Caco-2 (cell line): ENCODE measurements at regions of chr14 and their contacts with region 1.

Region 1: DNA sequence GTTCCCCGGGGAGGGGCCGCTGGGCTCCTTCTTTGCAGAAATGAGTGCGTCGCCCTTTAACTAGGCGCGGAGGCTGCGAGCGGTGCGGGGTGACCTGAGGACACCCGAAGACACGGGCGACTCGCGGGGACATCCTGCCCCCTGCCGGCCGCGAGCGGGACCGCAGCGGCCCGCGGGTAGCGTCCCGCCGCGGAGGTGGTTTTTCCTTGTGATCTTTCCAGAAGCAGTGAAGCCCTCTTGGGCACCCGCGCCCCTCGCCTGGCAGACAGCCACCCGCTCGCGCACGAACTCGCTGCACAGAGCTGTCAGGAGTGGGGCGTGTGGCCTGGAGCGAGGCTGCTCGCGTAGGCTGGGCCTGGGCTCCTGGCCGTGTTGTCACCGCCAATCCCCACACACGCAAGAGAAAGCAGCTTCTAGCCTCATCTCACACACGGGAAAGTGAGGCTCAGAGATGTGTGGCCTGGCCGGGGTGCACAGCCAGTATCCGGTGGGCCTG is 67.2 kb downstream of the DIO3 start:
- DNase-seq: peak; percentile 56 to 81
- H3K4me3 ChIP-seq: no peak overlapping the region
- H3K4me3 Mint-ChIP-seq: no peak overlapping the region
- H3K27ac Mint-ChIP-seq: no peak overlapping the region
- H3K4me1 ChIP-seq: no peaks in the 10 kb centered on the region
- H3K4me1 Mint-ChIP-seq: no peaks in the 10 kb centered on the region
- H3K27me3 ChIP-seq: no peaks in the 10 kb centered on the region
- H3K27me3 Mint-ChIP-seq: peaks cover 3% of the 10 kb centered on the region
- CTCF ChIP-seq: peak; percentile 86 to 98

Region 2: DNA sequence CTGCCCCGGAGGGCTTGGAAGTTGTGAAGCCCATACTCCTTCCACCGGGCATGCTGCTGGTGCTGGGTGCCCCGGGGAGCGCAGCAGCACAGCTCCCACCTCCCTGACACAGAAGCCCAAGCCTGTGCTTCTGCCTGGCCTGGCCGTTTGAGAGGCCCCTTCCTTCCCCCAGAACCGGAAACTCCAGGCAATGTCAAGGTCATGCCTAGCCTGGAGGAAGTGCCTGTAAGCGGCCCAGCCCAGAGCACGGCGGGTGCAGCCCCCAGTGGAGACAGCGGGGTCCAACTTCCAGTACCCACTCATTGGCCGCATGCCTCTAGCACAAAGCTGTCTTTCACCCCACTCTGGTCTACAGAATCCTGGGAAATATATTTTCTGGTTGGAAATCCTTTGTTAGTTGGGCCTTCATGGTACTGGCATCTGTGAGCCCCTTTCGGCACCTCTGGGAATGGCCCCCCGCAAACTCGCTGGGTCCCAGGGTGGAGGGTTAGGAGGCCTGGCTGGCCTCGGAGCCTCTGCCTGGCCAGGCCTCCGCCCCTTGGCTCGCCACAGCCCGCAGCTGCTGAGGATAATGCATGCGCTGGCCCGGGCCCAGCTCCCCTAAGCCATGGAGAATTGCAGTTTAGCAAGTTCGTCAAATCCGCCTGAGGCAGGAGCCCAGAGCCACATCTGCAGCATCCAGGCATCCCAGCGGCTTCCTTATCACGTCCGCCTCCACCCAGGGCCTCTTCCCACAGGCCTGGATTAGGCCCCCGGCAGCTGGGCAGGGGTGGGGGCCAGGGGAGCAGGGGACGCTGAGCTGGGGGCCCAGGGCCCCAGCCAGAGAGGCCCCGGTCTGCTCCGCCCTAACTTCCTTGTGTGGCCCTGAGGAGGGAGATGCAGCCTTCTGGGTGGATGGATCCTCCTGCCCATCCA is 950.7 kb before region 1 on chr14:
- CTCF ChIA-PET with region 1: interaction called, 5 read pairs
- POLR2A ChIA-PET with region 1: no interaction called
- intact Hi-C with region 1: loop called (anchors 10 kb)
- DNase-seq: no peak
- H3K4me3 ChIP-seq: no peak overlapping the region
- H3K4me3 Mint-ChIP-seq: no peak overlapping the region
- H3K27ac Mint-ChIP-seq: no peak overlapping the region
- H3K4me1 ChIP-seq: 0 out of 2 replicates have a peak, but pooled peaks cover 2% of the 10 kb centered on the region
- H3K4me1 Mint-ChIP-seq: peaks cover 9% of the 10 kb centered on the region
- H3K27me3 ChIP-seq: no peaks in the 10 kb centered on the region
- H3K27me3 Mint-ChIP-seq: no peaks in the 10 kb centered on the region
- CTCF ChIP-seq: no peak

Region 3: DNA sequence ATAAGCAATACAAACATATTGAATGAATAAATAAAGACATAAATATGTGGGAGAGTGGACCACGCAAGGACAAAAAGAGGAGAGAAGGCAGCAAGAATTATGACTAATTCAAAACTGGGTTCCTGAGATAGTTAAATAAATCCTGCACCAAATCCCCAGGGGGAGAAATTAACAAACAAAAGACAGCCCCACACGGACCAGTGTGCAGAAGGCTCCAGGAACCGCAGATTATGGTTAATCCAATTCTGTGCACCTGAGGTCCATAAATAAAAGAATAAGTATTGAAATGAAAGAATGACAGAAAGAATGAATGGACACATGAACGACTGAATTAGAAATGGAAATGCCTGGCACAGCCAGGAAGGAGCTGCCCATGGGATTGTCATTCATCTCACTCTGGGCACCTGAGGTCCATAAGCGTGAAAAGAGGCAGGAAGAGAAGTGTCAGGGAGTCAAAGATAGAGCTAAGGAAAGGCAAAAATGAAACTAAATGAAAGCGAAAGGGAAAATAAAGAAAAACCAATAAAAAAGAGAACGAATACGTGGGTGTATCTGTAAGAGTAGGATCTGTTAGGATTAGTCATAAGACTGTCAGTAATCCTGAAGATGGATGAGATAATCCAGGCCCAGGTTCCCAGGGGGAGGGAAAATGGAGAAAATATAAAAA is 779.3 kb before region 1 on chr14:
- CTCF ChIA-PET with region 1: interaction called, 3 read pairs
- POLR2A ChIA-PET with region 1: no interaction called
- intact Hi-C with region 1: loop called (anchors 5 kb)
- DNase-seq: no peak
- H3K4me3 ChIP-seq: no peak overlapping the region
- H3K4me3 Mint-ChIP-seq: no peak overlapping the region
- H3K27ac Mint-ChIP-seq: no peak overlapping the region
- H3K4me1 ChIP-seq: no peaks in the 10 kb centered on the region
- H3K4me1 Mint-ChIP-seq: no peaks in the 10 kb centered on the region
- H3K27me3 ChIP-seq: no peaks in the 10 kb centered on the region
- H3K27me3 Mint-ChIP-seq: peaks cover 3% of the 10 kb centered on the region
- CTCF ChIP-seq: no peak

Region 4: DNA sequence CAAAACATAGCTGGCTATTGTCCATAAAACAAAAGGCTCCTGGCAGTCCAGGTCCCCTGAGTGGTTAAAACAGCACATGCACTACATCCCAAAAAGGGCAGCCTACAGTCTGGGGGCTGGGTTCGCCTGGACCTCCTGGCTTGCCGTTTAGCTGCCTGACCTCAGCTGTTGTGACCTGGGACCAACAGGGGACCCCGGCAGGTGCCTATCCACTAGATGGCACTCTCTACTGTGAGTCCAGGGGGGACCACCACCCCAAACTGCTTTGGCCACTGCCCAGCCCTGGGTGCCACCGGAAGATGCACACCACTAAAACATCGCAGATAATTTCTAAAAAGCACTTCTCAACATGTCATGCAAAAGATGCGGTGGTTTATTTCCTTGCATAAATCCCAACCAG is 722.1 kb before region 1 on chr14:
- CTCF ChIA-PET with region 1: no interaction called
- POLR2A ChIA-PET with region 1: no interaction called
- intact Hi-C with region 1: loop called (anchors 1 kb)
- DNase-seq: no peak
- H3K4me3 ChIP-seq: no peak overlapping the region
- H3K4me3 Mint-ChIP-seq: no peak overlapping the region
- H3K27ac Mint-ChIP-seq: no peak overlapping the region
- H3K4me1 ChIP-seq: no peaks in the 10 kb centered on the region
- H3K4me1 Mint-ChIP-seq: no peaks in the 10 kb centered on the region
- H3K27me3 ChIP-seq: no peaks in the 10 kb centered on the region; the same call in 1 of the 2 replicates
- H3K27me3 Mint-ChIP-seq: peaks cover 20% of the 10 kb centered on the region
- CTCF ChIP-seq: peak in 1 of 2 experiments; percentile 63

Region 5: DNA sequence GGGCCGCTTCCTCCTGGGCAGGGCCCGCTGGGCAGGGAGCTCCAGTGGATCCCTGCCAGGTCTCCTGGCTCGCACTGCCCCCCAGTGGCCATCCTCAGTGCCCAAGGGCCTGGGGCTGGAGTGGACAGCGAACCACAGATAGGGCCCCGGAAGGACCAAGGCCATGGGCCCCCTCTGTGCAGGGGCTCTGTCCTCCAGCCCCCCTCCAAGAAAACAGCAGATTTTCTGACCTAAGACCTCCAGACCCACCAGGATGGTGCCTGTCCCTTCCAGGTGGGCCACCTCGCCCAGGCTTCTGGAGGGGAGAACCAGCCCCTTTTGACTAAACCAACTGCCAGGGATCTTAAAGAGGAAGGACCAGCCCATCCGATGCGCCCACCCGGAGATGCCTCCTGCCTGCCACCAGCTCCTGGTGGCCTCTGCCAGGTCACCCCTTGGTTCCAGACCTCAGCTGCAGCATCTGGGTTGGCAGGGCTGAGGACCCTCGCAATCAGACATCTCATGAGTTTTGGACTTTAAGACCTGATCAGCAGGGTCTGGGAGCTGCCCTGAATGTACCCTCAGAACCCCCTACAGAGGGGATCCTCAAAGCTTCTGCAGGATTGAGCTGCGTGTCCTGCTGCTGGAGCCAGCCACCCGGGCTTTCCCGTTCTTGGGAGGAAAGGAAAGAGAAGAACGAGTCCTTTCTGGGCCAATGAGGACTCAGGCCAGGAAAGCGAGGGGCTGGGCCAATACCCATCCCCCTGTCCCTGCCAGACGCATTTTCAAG is 393.0 kb before region 1 on chr14:
- CTCF ChIA-PET with region 1: no interaction called
- POLR2A ChIA-PET with region 1: no interaction called
- intact Hi-C with region 1: loop called (anchors 10 kb)
- DNase-seq: peak; percentile 26 to 54
- H3K4me3 ChIP-seq: no peak overlapping the region
- H3K4me3 Mint-ChIP-seq: no peak overlapping the region
- H3K27ac Mint-ChIP-seq: no peak overlapping the region
- H3K4me1 ChIP-seq: no peaks in the 10 kb centered on the region
- H3K4me1 Mint-ChIP-seq: no peaks in the 10 kb centered on the region
- H3K27me3 ChIP-seq: no peaks in the 10 kb centered on the region
- H3K27me3 Mint-ChIP-seq: no peaks in the 10 kb centered on the region
- CTCF ChIP-seq: peak; percentile 27 to 48